Activated CD4-positive, alpha-beta T cell treated with anti-CD3 and anti-CD28 coated beads, Interleukin-2, amount 10 ng/mL, durations not matched to agents 7 days and 5 days (primary cell): ENCODE measurements at regions of chr3 and their contacts with region 1.

Region 1: GRCh38 chr3:185195652-185196051 is 42.8 kb upstream of the C3orf70 start:
- DNase-seq: no peak
- H3K4me3 Mint-ChIP-seq: no peak overlapping the region
- H3K27ac Mint-ChIP-seq: no peak overlapping the region
- H3K4me1 Mint-ChIP-seq: no peaks in the 10 kb centered on the region
- H3K27me3 Mint-ChIP-seq: peaks cover 7% of the 10 kb centered on the region

Region 2: GRCh38 chr3:185041540-185041939 is 154.1 kb before region 1 on chr3:
- CTCF ChIA-PET with region 1: no interaction called
- POLR2A ChIA-PET with region 1: interaction called, 10 read pairs
- DNase-seq: no peak
- H3K4me3 Mint-ChIP-seq: no peak overlapping the region
- H3K27ac Mint-ChIP-seq: no peak overlapping the region
- H3K4me1 Mint-ChIP-seq: no peaks in the 10 kb centered on the region
- H3K27me3 Mint-ChIP-seq: no peaks in the 10 kb centered on the region

Region 3: DNA sequence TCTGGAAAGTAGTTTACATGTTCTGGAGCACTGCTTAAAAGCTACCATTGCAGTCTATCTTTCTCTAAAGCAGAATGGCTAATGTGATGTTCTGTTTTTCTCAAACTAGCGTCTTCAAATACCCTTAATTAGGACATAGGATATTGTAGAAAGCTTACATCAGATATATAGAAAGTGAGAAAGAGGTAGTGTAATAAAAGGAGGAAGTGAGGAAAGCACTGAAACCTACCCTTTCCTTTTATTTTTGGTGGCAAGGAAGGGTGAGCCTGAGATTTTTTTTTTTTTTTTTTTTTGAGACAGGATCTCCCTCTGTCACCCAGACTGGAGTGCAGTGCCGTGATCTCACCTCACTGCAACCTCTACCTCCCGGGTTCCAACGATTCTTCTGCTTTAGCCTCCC is 399.9 kb after region 1 on chr3:
- CTCF ChIA-PET with region 1: no interaction called
- POLR2A ChIA-PET with region 1: no interaction called
- DNase-seq: no peak
- H3K4me3 Mint-ChIP-seq: no peak overlapping the region
- H3K27ac Mint-ChIP-seq: no peak overlapping the region
- H3K4me1 Mint-ChIP-seq: peaks cover 11% of the 10 kb centered on the region
- H3K27me3 Mint-ChIP-seq: no peaks in the 10 kb centered on the region